Left ventricle myocardium superior (tissue), 1 donor: ENCODE measurements at regions of chr3 and their contacts with region 1.

Region 1: GRCh38 chr3:148861277-148861869 is 3.7 kb upstream of the CPA3 start:
- DNase-seq: no peak
- ATAC-seq: peak; percentile 30

Region 2: DNA sequence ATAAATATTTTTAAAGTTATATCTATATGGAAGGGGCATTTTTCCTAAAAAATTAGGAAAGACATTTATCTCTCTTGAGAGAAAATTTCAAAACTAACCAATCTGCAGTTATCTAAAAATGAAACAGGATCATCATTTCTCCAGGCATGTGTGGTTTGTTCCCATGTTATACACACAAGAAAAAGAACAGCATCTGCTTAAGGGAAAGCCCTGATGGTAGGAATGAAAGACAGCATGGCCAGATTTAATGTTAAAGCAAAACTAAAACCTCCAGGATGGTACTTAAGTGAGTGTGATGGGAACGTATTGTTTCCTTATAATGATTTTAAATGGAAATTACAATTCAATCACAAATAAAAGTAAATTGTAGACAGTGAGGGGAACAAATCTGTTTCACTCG is 83.7 kb after region 1 on chr3:
- intact Hi-C with region 1: loop called (anchors 5 kb)
- DNase-seq: no peak
- ATAC-seq: no peak